CD8-positive, alpha-beta T cell (primary cell): ENCODE measurements at regions of chr10 and their contacts with region 1.

Region 1: GRCh38 chr10:5813287-5814109 is at the start of gene GDI2:
- DNase-seq: peak; percentile 91 to 98 (median 96)
- ATAC-seq: peak; percentile 93
- H3K4me3 ChIP-seq: peak within 1 kb of the TSS; percentile 68 to 83
- H3K4me3 Mint-ChIP-seq: peak within 1 kb of the TSS; percentile 86
- H3K27ac ChIP-seq: peak within 1 kb of the TSS; percentile 87 to 93
- H3K27ac Mint-ChIP-seq: peak within 1 kb of the TSS; percentile 87
- H3K4me1 ChIP-seq: peaks cover 48% of the 10 kb centered on the region
- H3K4me1 Mint-ChIP-seq: peaks cover 56% of the 10 kb centered on the region
- H3K27me3 ChIP-seq: no peaks in the 10 kb centered on the region
- H3K27me3 Mint-ChIP-seq: no peaks in the 10 kb centered on the region
- CTCF ChIP-seq: no peak
- total RNA-seq, gene GDI2: 62.1 to 70.5 TPM

Region 2: GRCh38 chr10:5776136-5776880 is 37.2 kb before region 1 on chr10:
- CTCF ChIA-PET with region 1: interaction called, 4 read pairs
- POLR2A ChIA-PET with region 1: interaction called, 6 read pairs
- intact Hi-C with region 1: loop called (anchors 1 to 5 kb)
- DNase-seq: no peak
- ATAC-seq: no peak
- H3K4me3 ChIP-seq: peak overlapping the region in 1 of 2 experiments; percentile 24
- H3K4me3 Mint-ChIP-seq: peak overlapping the region; percentile 73
- H3K27ac ChIP-seq: peak overlapping the region; percentile 54 to 56
- H3K27ac Mint-ChIP-seq: peak overlapping the region; percentile 97
- H3K4me1 ChIP-seq: peaks cover 18% of the 10 kb centered on the region
- H3K4me1 Mint-ChIP-seq: peaks cover 66% of the 10 kb centered on the region
- H3K27me3 ChIP-seq: no peaks in the 10 kb centered on the region
- H3K27me3 Mint-ChIP-seq: no peaks in the 10 kb centered on the region
- CTCF ChIP-seq: no peak

Region 3: DNA sequence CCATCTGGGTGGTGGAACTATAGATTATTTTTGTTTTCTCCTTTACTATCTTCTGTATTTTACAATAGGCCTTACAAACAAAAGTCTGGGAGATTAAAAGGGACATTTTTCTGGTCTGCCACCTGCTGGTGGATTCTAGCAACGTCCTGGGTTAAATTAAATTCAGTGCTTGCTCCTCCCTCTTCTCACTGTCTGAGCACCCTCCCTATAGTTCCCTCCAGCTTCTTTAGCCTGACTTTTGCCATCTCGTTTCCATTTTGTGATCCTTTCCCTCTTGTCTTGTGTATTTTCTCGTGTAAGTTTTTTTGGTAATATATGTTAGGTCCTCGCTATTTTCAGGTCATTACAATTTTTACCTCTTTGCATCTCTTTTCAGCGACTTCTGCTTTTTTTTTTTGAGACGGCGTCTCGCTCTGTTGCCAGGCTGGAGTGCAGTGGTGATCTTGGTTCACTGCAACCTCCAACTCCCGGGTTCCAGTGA is 60.1 kb after region 1 on chr10:
- CTCF ChIA-PET with region 1: interaction called, 3 read pairs
- POLR2A ChIA-PET with region 1: interaction called, 5 read pairs
- intact Hi-C with region 1: loop called (anchors 1 to 5 kb)
- DNase-seq: peak; percentile 45 to 77 (median 66)
- ATAC-seq: peak; percentile 99
- H3K4me3 ChIP-seq: no peak overlapping the region
- H3K4me3 Mint-ChIP-seq: peak overlapping the region; percentile 50
- H3K27ac ChIP-seq: no peak overlapping the region
- H3K27ac Mint-ChIP-seq: no peak overlapping the region
- H3K4me1 ChIP-seq: no peaks in the 10 kb centered on the region
- H3K4me1 Mint-ChIP-seq: peaks cover 2% of the 10 kb centered on the region
- H3K27me3 ChIP-seq: no peaks in the 10 kb centered on the region
- H3K27me3 Mint-ChIP-seq: no peaks in the 10 kb centered on the region
- CTCF ChIP-seq: peak; percentile 68

Region 4: GRCh38 chr10:5889624-5890451 is 76.3 kb after region 1 on chr10 and contains the starts of genes ANKRD16 and FBH1:
- CTCF ChIA-PET with region 1: interaction called, 3 read pairs
- POLR2A ChIA-PET with region 1: interaction called, 14 read pairs
- intact Hi-C with region 1: loop called (anchors 1 kb)
- DNase-seq: peak; percentile 93 to 99 (median 97)
- ATAC-seq: peak; percentile 89
- H3K4me3 ChIP-seq: peak within 1 kb of the TSS; percentile 79 to 88
- H3K4me3 Mint-ChIP-seq: peak within 1 kb of the TSS; percentile 90
- H3K27ac ChIP-seq: peak within 1 kb of the TSS; percentile 47 to 63
- H3K27ac Mint-ChIP-seq: peak within 1 kb of the TSS; percentile 81
- H3K4me1 ChIP-seq: peaks cover 19% of the 10 kb centered on the region
- H3K4me1 Mint-ChIP-seq: peaks cover 50% of the 10 kb centered on the region
- H3K27me3 ChIP-seq: no peaks in the 10 kb centered on the region
- H3K27me3 Mint-ChIP-seq: no peaks in the 10 kb centered on the region
- CTCF ChIP-seq: no peak
- total RNA-seq, gene ANKRD16: 1.7 to 2.1 TPM
- total RNA-seq, gene FBH1: 23.5 to 24.8 TPM

Region 5: GRCh38 chr10:5977471-5978229 is 164.2 kb after region 1 on chr10 and contains the start of gene IL15RA:
- CTCF ChIA-PET with region 1: no interaction called
- POLR2A ChIA-PET with region 1: no interaction called
- intact Hi-C with region 1: loop called (anchors 2 to 10 kb)
- DNase-seq: peak; percentile 54 to 91 (median 84)
- ATAC-seq: peak; percentile 78
- H3K4me3 ChIP-seq: peak within 1 kb of the TSS; percentile 92 to 95
- H3K4me3 Mint-ChIP-seq: peak within 1 kb of the TSS; percentile 97
- H3K27ac ChIP-seq: peak within 1 kb of the TSS; percentile 77 to 82
- H3K27ac Mint-ChIP-seq: peak within 1 kb of the TSS; percentile 96
- H3K4me1 ChIP-seq: peaks cover 12% of the 10 kb centered on the region
- H3K4me1 Mint-ChIP-seq: peaks cover 24% of the 10 kb centered on the region
- H3K27me3 ChIP-seq: no peaks in the 10 kb centered on the region
- H3K27me3 Mint-ChIP-seq: no peaks in the 10 kb centered on the region
- CTCF ChIP-seq: no peak
- total RNA-seq, gene IL15RA: 4.8 to 5.4 TPM

Region 6: GRCh38 chr10:6163364-6164270 is 350.1 kb after region 1 on chr10:
- CTCF ChIA-PET with region 1: no interaction called
- POLR2A ChIA-PET with region 1: no interaction called
- intact Hi-C with region 1: loop called in 1 of 2 experiments (anchors 1 kb)
- DNase-seq: peak; percentile 80 to 97 (median 92)
- ATAC-seq: peak; percentile 91
- H3K4me3 ChIP-seq: peak overlapping the region; percentile 76 to 81
- H3K4me3 Mint-ChIP-seq: peak overlapping the region; percentile 92
- H3K27ac ChIP-seq: peak overlapping the region; percentile 86 to 90
- H3K27ac Mint-ChIP-seq: peak overlapping the region; percentile 98
- H3K4me1 ChIP-seq: peaks cover 31% of the 10 kb centered on the region
- H3K4me1 Mint-ChIP-seq: peaks cover 54% of the 10 kb centered on the region
- H3K27me3 ChIP-seq: no peaks in the 10 kb centered on the region
- H3K27me3 Mint-ChIP-seq: no peaks in the 10 kb centered on the region
- CTCF ChIP-seq: no peak

Region 7: GRCh38 chr10:7818295-7819122 is 2005.0 kb after region 1 on chr10 and contains the start of gene TAF3:
- CTCF ChIA-PET with region 1: no interaction called
- POLR2A ChIA-PET with region 1: no interaction called
- intact Hi-C with region 1: loop called in 1 of 2 experiments (anchors 10 kb)
- DNase-seq: peak; percentile 88 to 95 (median 92)
- ATAC-seq: peak; percentile 92
- H3K4me3 ChIP-seq: peak within 1 kb of the TSS; percentile 93 to 99
- H3K4me3 Mint-ChIP-seq: peak within 1 kb of the TSS; percentile 98
- H3K27ac ChIP-seq: peak within 1 kb of the TSS; percentile 64 to 70
- H3K27ac Mint-ChIP-seq: peak within 1 kb of the TSS; percentile 91
- H3K4me1 ChIP-seq: peaks cover 25% of the 10 kb centered on the region
- H3K4me1 Mint-ChIP-seq: peaks cover 44% of the 10 kb centered on the region
- H3K27me3 ChIP-seq: no peaks in the 10 kb centered on the region
- H3K27me3 Mint-ChIP-seq: no peaks in the 10 kb centered on the region
- CTCF ChIP-seq: no peak
- total RNA-seq, gene TAF3: 12.1 to 12.4 TPM